Ascending aorta (tissue), 2 donors: ENCODE measurements at regions of chr12 and their contacts with region 1.

Region 1: DNA sequence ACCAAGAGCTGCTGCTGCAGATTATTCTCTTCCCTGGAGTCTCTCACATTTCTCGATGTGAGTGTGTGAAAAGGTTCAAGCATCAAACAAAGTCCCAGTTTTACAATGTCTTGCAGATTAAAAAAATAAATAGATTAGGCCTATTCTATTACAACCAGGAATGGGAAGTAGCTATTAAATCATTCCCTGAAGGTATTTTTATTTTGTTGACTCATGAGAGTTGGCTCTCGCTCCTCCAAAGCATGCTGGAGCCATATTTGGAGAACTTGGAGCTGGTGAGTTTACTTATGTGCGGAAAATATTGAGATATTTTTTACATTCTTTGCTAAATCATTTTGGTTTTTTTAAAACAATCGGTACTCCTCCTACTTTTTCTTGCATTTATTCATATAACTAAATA is 572.3 kb downstream of the ETNK1 start:
- DNase-seq: peak in 1 of 2 donors; percentile 69
- H3K4me3 ChIP-seq: peak overlapping the region; percentile 7 to 22
- H3K27ac ChIP-seq: peak overlapping the region; percentile 76 to 79
- H3K4me1 ChIP-seq: peaks cover 3 to 11% of the 10 kb centered on the region in 2 donors
- H3K27me3 ChIP-seq: no peaks in the 10 kb centered on the region
- CTCF ChIP-seq: no peak

Region 2: GRCh38 chr12:22684140-22685118 is 512.8 kb before region 1 on chr12:
- intact Hi-C with region 1: loop called (anchors 5 kb)
- DNase-seq: no peak
- H3K4me3 ChIP-seq: no peak overlapping the region
- H3K27ac ChIP-seq: no peak overlapping the region
- H3K4me1 ChIP-seq: peaks cover 11 to 20% of the 10 kb centered on the region in 2 donors
- H3K27me3 ChIP-seq: no peaks in the 10 kb centered on the region
- CTCF ChIP-seq: peak; percentile 40 to 62 (median 46)

Region 3: GRCh38 chr12:23503544-23503943 is 306.3 kb after region 1 on chr12:
- intact Hi-C with region 1: no loop called
- DNase-seq: no peak
- H3K4me3 ChIP-seq: no peak overlapping the region
- H3K27ac ChIP-seq: no peak overlapping the region
- H3K4me1 ChIP-seq: no peaks in the 10 kb centered on the region
- H3K27me3 ChIP-seq: no peaks in the 10 kb centered on the region
- CTCF ChIP-seq: no peak

Region 4: DNA sequence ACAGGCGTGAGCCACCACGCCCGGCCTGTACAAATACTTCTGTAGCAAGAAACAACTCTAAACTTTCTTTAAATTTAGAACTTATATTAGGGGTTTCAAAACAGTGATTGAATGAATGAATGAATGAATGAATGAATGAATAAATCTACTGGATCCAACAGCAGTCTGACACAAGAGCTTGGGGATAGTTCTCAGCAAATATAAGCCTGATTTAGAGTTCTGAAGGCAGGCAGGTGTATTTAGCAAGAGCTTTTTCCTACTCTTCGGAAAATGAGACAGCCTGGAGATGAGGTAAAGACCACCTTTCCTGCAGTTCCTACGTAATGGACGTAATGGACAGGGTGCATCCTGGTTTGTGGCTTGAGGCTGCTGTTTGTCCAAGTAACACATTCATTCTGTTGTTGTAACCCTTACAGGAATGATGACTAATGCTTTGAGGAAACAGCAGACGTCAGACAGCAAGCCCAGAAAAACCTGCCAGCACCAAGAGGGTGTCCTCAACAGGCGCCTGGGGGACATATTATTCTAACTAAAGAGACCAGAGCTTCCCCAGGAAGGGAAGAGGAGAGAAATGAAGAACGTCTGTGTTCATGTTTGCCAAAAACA is 1029.6 kb after region 1 on chr12:
- intact Hi-C with region 1: loop called (anchors 5 kb)
- DNase-seq: peak; percentile 9 to 81
- H3K4me3 ChIP-seq: no peak overlapping the region
- H3K27ac ChIP-seq: peak overlapping the region; percentile 30 to 42
- H3K4me1 ChIP-seq: peaks cover 7 to 14% of the 10 kb centered on the region in 2 donors
- H3K27me3 ChIP-seq: no peaks in the 10 kb centered on the region
- CTCF ChIP-seq: no peak